ENCODE measurements at regions of chr20 and their contacts with region 1.

Region 1: GRCh38 chr20:33450867-33451266 is 7.3 kb upstream of the SNTA1 start:
- DNase-seq: no peak
- H3K4me3 ChIP-seq: no peak overlapping the region
- H3K27ac ChIP-seq: no peak overlapping the region
- H3K4me1 ChIP-seq: peaks cover 10% of the 10 kb centered on the region in 2 donors
- H3K27me3 ChIP-seq: no peaks in the 10 kb centered on the region
- CTCF ChIP-seq: no peak
- POLR2A ChIP-seq: no peak

Region 2: GRCh38 chr20:33653218-33653899 is 202.5 kb after region 1 on chr20:
- intact Hi-C with region 1: loop called (anchors 5 kb)
- DNase-seq: peak; percentile 70 to 73
- H3K4me3 ChIP-seq: no peak overlapping the region
- H3K27ac ChIP-seq: no peak overlapping the region
- H3K4me1 ChIP-seq: peaks cover 11 to 24% of the 10 kb centered on the region in 2 donors
- H3K27me3 ChIP-seq: no peaks in the 10 kb centered on the region
- CTCF ChIP-seq: peak; percentile 50 to 84 (median 79)
- POLR2A ChIP-seq: no peak